Activated naive CD4-positive, alpha-beta T cell treated with anti-CD3 and anti-CD28 coated beads for 36 hours (primary cell): ENCODE measurements at regions of chr11 and their contacts with region 1.

Region 1: DNA sequence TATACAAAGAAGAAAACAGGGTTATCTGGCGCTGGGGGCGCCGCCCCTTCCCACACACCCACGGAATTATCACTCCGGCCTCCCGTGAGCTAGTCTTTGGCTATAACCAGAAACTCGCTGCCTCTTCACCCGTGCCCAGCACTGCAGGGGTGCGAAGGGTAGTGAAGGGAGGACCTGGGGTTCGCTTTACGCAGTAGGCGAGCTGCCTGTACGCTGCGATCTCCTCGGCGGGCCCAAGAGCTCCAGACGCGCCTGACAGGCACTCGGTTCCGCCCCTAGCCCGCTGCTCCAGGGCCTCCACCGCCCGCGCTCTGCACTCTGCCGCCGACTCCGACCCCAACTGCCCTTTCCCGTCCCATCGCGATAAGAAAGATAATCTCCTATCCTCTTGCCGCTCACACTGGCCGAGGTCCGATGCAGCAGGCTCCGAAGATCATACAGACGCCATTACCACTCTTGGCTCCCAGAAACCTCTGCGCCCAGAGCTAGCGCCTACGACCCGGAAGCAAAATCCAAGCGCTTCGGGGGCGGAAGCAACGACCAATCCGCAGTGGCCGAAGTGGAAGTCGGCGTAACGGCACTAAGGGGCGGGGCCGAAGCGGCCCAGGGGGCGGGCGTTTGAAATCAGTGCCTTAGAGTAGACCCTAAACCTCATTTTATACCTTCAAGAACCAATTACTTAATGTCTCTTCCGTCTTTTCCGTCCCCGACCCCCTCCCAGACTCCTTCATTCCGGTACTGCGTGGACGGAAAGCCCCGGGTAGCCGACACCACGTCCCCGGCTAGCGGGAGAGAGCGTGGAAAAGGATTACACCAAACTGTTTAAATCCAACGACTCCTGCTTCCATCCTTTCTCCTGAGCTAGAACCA is at the starts of genes CWC15 and KDM4D:
- DNase-seq: peak; percentile 97
- H3K4me3 Mint-ChIP-seq: peak within 1 kb of the TSS; percentile 97
- H3K27ac Mint-ChIP-seq: peak within 1 kb of the TSS; percentile 89
- H3K4me1 Mint-ChIP-seq: peaks cover 38% of the 10 kb centered on the region
- H3K27me3 Mint-ChIP-seq: no peaks in the 10 kb centered on the region
- total RNA-seq, gene CWC15: 70.6 to 72.3 TPM
- total RNA-seq, gene KDM4D: 1.7 to 2.1 TPM

Region 2: GRCh38 chr11:93197380-93198214 is 1775.7 kb before region 1 on chr11 and contains the start of gene SLC36A4:
- CTCF ChIA-PET with region 1: no interaction called
- intact Hi-C with region 1: loop called (anchors 5 kb)
- DNase-seq: peak; percentile 92
- H3K4me3 Mint-ChIP-seq: peak within 1 kb of the TSS; percentile 80
- H3K27ac Mint-ChIP-seq: peak within 1 kb of the TSS; percentile 94
- H3K4me1 Mint-ChIP-seq: peaks cover 14% of the 10 kb centered on the region
- H3K27me3 Mint-ChIP-seq: no peaks in the 10 kb centered on the region
- total RNA-seq, gene SLC36A4: 13.2 to 13.9 TPM

Region 3: GRCh38 chr11:94134651-94135512 is 838.5 kb before region 1 on chr11:
- CTCF ChIA-PET with region 1: no interaction called
- intact Hi-C with region 1: loop called (anchors 5 kb)
- DNase-seq: peak; percentile 78
- H3K4me3 Mint-ChIP-seq: no peak overlapping the region
- H3K27ac Mint-ChIP-seq: peak overlapping the region; percentile 22
- H3K4me1 Mint-ChIP-seq: peaks cover 40% of the 10 kb centered on the region
- H3K27me3 Mint-ChIP-seq: no peaks in the 10 kb centered on the region

Region 4: DNA sequence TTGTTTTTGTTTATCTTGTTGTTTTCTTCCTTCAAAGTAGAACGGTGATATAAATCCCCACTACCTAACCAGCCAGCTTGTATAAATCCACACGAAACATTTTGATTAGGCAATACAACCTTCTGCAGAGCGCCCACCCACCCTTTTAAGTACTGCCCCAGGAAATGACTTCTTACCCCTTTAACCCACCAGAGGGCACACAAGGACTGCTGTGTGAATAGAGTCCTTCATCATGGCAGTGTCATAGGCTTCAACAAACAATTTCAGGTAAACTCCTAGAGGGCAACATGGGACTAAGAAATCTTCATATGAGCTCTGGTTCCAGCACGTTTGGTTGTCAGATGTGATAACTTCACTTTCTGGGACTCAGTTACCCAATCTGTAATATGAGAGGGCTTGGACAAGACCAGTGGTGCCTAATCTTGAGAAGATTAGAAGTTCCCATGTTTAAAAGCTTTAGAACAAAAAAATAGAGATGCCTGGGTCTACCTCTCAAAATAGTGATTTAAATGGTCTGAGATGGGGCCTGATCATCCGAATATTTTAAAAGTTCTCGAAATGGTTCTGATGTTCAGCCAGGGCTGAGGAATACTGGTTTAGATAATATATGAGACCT is 350.1 kb before region 1 on chr11:
- CTCF ChIA-PET with region 1: no interaction called
- intact Hi-C with region 1: loop called (anchors 2 kb)
- DNase-seq: peak; percentile 78
- H3K4me3 Mint-ChIP-seq: no peak overlapping the region
- H3K27ac Mint-ChIP-seq: no peak overlapping the region
- H3K4me1 Mint-ChIP-seq: no peaks in the 10 kb centered on the region
- H3K27me3 Mint-ChIP-seq: peaks cover 7% of the 10 kb centered on the region

Region 5: DNA sequence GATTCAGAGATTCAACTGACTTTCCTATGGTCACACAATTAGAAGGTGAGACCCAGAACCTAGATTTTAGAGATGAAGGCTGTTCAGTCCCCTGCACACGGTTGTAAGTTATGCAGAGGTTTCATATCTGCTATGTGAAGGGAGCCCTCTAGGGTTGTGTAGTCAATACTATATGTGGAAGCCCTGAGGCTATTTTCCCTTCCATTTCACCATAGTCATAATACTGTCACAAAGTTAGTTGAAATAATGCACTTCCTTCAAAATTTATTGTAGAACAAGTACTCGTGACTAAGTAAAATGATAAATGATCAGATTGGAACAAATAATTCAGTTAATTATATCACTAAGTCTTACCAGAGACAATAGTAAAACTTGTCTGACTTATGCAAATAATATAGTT is 165.1 kb after region 1 on chr11:
- CTCF ChIA-PET with region 1: no interaction called
- intact Hi-C with region 1: loop called (anchors 1 kb)
- DNase-seq: no peak
- H3K4me3 Mint-ChIP-seq: no peak overlapping the region
- H3K27ac Mint-ChIP-seq: no peak overlapping the region
- H3K4me1 Mint-ChIP-seq: peaks cover 7% of the 10 kb centered on the region
- H3K27me3 Mint-ChIP-seq: peaks cover 9% of the 10 kb centered on the region

Region 6: DNA sequence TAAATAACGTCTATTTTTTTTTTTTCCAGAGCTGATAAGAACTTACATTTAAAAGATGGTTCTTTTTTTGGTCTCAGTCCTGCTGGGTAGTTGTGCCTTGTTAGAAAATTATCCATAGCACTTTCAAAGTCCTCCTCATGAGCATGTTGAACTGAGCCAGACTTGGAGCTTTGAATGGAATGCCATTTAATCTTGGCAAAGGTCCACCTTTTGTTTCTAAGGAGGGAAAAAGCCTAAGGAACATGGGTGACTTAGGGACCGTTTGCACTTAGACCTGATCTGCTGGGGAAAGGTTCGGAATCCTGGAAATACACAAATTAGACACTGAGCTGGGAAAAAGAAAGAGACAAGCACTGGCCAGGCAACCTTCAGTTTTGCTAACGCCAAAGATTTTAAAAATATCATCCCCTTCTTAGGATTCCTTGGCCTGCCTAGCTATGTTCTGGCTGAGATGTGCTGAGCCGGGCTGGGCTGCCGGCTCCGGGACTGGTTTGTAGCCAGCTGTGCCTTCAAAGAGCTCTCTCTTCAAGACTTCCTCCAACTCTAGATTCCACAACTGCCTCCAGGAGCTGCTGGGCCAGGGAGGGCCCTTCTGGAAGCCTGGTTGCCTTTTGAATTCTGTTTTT is 183.7 kb after region 1 on chr11:
- CTCF ChIA-PET with region 1: no interaction called
- intact Hi-C with region 1: no loop called
- DNase-seq: no peak
- H3K4me3 Mint-ChIP-seq: no peak overlapping the region
- H3K27ac Mint-ChIP-seq: no peak overlapping the region
- H3K4me1 Mint-ChIP-seq: peaks cover 35% of the 10 kb centered on the region
- H3K27me3 Mint-ChIP-seq: no peaks in the 10 kb centered on the region

Region 7: GRCh38 chr11:96389720-96390487 is 1416.6 kb after region 1 on chr11 and contains the starts of genes CCDC82 and JRKL:
- CTCF ChIA-PET with region 1: no interaction called
- intact Hi-C with region 1: loop called (anchors 1 kb)
- DNase-seq: peak; percentile 99
- H3K4me3 Mint-ChIP-seq: peak within 1 kb of the TSS; percentile 89
- H3K27ac Mint-ChIP-seq: peak within 1 kb of the TSS; percentile 91
- H3K4me1 Mint-ChIP-seq: peaks cover 58% of the 10 kb centered on the region
- H3K27me3 Mint-ChIP-seq: no peaks in the 10 kb centered on the region
- total RNA-seq, gene CCDC82: 32.0 to 34.0 TPM
- total RNA-seq, gene JRKL: 12.3 to 12.7 TPM